B cell (primary cell): ENCODE measurements at regions of chr7 and their contacts with region 1.

Region 1: DNA sequence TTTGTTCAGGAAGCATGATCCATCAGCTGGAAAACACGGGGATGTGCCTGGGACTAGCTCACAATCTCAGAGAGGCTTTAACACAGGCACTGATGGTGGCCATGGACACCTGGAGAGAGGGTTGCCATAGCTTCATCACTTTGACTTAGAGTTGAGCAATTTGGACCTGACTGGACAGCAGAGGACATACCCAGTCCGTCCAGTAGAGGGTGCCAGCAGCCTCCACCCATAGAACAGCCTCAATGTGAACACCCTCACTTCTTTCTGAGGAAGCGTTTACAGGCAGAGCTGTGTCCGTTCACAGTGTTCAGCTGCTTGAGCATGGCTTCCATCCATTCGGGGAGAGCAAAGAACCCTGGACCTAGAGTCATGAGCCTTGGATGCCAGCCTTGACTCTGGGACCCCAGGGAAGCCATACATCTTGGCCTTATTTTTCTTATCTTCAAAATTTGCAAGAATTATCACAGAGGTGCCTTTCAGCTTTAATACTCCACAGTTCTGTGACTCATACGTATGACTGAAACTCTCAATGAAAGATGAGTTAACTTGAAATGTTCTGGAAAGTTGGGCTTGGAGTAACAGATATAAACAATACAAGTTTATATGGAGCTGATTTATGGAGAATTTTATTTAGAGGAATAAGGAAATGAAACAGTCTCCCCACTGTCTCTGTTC is 302.9 kb upstream of the PODXL start:
- DNase-seq: peak; percentile 30
- ATAC-seq: no peak
- H3K4me3 ChIP-seq: no peak overlapping the region
- H3K4me3 Mint-ChIP-seq: no peak overlapping the region
- H3K27ac ChIP-seq: no peak overlapping the region
- H3K27ac Mint-ChIP-seq: no peak overlapping the region
- H3K4me1 ChIP-seq: no peaks in the 10 kb centered on the region
- H3K4me1 Mint-ChIP-seq: no peaks in the 10 kb centered on the region
- H3K27me3 ChIP-seq: no peaks in the 10 kb centered on the region
- H3K27me3 Mint-ChIP-seq: peaks cover 3% of the 10 kb centered on the region
- CTCF ChIP-seq: peak; percentile 78

Region 2: DNA sequence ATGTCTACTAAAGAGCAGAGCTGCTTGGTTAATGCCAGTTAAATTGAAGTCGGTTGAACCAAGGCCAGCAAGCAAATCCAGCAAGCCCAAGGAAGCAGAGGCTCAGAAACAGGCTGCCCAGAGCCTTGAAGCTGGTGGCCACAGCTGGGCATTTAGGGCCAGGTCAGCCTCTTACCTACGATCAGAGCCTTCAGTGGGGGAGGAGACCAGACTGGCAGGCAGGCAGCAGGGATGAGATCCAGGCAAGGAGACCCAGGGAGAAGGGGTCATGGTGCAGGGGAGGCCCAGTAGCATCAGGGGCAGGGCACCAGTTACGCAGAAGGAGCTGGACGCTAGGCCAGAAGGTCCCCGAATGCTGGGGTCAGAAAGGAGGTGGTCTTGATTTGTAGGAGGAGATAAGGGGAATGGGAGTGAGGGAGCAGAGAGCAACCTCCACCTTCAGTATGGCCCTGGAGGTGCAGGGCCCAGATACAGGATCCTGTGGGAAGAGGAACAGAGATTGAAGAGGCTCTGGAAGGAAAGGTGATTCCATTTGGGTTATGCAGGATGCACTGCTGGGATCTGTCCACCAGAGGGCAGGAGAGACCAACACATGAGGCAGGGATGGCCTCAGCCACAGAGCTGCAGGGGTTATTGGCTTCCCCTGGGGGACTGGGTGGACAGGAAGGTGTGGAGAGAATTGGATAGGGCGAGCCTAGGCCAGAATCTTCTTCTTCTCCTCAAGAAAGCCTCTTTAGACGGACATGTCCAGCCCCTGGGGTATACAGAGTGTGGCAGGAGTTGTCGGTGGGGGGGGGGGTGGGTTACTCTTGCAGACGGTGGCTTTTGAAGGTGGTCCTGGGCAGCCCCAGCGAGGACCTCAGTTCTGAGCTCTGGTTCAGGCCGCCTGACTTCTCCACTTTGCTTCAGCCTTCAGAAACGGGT is 170.3 kb before region 1 on chr7:
- CTCF ChIA-PET with region 1: no interaction called
- POLR2A ChIA-PET with region 1: no interaction called
- intact Hi-C with region 1: no loop called
- DNase-seq: peak; percentile 58
- ATAC-seq: peak; percentile 61
- H3K4me3 ChIP-seq: no peak overlapping the region
- H3K4me3 Mint-ChIP-seq: no peak overlapping the region
- H3K27ac ChIP-seq: no peak overlapping the region
- H3K27ac Mint-ChIP-seq: no peak overlapping the region
- H3K4me1 ChIP-seq: no peaks in the 10 kb centered on the region
- H3K4me1 Mint-ChIP-seq: peaks cover 4% of the 10 kb centered on the region
- H3K27me3 ChIP-seq: peaks cover 0 to 32% (median 5%) of the 10 kb centered on the region in 4 experiments
- H3K27me3 Mint-ChIP-seq: peaks cover 45% of the 10 kb centered on the region
- CTCF ChIP-seq: peak; percentile 94

Region 3: GRCh38 chr7:131819891-131820290 is 39.4 kb before region 1 on chr7:
- CTCF ChIA-PET with region 1: no interaction called
- POLR2A ChIA-PET with region 1: no interaction called
- intact Hi-C with region 1: no loop called
- DNase-seq: no peak
- ATAC-seq: no peak
- H3K4me3 ChIP-seq: no peak overlapping the region
- H3K4me3 Mint-ChIP-seq: no peak overlapping the region
- H3K27ac ChIP-seq: no peak overlapping the region
- H3K27ac Mint-ChIP-seq: no peak overlapping the region
- H3K4me1 ChIP-seq: no peaks in the 10 kb centered on the region
- H3K4me1 Mint-ChIP-seq: no peaks in the 10 kb centered on the region
- H3K27me3 ChIP-seq: no peaks in the 10 kb centered on the region
- H3K27me3 Mint-ChIP-seq: no peaks in the 10 kb centered on the region
- CTCF ChIP-seq: no peak

Region 4: GRCh38 chr7:131869169-131869844 is 10.0 kb after region 1 on chr7:
- CTCF ChIA-PET with region 1: interaction called, 12 read pairs
- POLR2A ChIA-PET with region 1: no interaction called
- intact Hi-C with region 1: no loop called
- DNase-seq: no peak
- ATAC-seq: no peak
- H3K4me3 ChIP-seq: no peak overlapping the region
- H3K4me3 Mint-ChIP-seq: no peak overlapping the region
- H3K27ac ChIP-seq: no peak overlapping the region
- H3K27ac Mint-ChIP-seq: no peak overlapping the region
- H3K4me1 ChIP-seq: no peaks in the 10 kb centered on the region
- H3K4me1 Mint-ChIP-seq: no peaks in the 10 kb centered on the region
- H3K27me3 ChIP-seq: no peaks in the 10 kb centered on the region
- H3K27me3 Mint-ChIP-seq: peaks cover 10% of the 10 kb centered on the region
- CTCF ChIP-seq: no peak